ENCODE measurements at regions of chr1 and their contacts with region 1.

Region 1: GRCh38 chr1:5745776-5746610 is 246.2 kb downstream of the NPHP4 start:
- DNase-seq: peak; percentile 71 to 80
- ATAC-seq: peak; percentile 79 to 97
- H3K4me3 ChIP-seq: no peak overlapping the region
- H3K27ac ChIP-seq: no peak overlapping the region
- H3K4me1 ChIP-seq: no peaks in the 10 kb centered on the region
- CTCF ChIP-seq: peak; percentile 73
- EP300 ChIP-seq: no peak
- POLR2A ChIP-seq: no peak
- RAD21 ChIP-seq: peak; percentile 78 to 81

Region 2: GRCh38 chr1:4655674-4656532 is 1090.1 kb before region 1 on chr1:
- CTCF ChIA-PET with region 1: interaction called, 14 read pairs
- POLR2A ChIA-PET with region 1: no interaction called
- DNase-seq: peak; percentile 68 to 76
- ATAC-seq: peak; percentile 80 to 93
- H3K4me3 ChIP-seq: peak overlapping the region; percentile 45
- H3K27ac ChIP-seq: peak overlapping the region; percentile 66 to 83
- H3K4me1 ChIP-seq: peaks cover 16% of the 10 kb centered on the region
- CTCF ChIP-seq: peak; percentile 58
- EP300 ChIP-seq: no peak
- POLR2A ChIP-seq: no peak
- RAD21 ChIP-seq: peak; percentile 82 to 86

Region 3: GRCh38 chr1:5444396-5444795 is 301.6 kb before region 1 on chr1:
- CTCF ChIA-PET with region 1: no interaction called
- POLR2A ChIA-PET with region 1: no interaction called
- DNase-seq: no peak
- ATAC-seq: no peak
- H3K4me3 ChIP-seq: no peak overlapping the region
- H3K27ac ChIP-seq: no peak overlapping the region
- H3K4me1 ChIP-seq: no peaks in the 10 kb centered on the region
- CTCF ChIP-seq: no peak
- EP300 ChIP-seq: no peak
- POLR2A ChIP-seq: no peak
- RAD21 ChIP-seq: no peak

Region 4: GRCh38 chr1:5734996-5735395 is 11.0 kb before region 1 on chr1:
- CTCF ChIA-PET with region 1: interaction called, 19 read pairs
- POLR2A ChIA-PET with region 1: no interaction called
- DNase-seq: no peak
- ATAC-seq: no peak
- H3K4me3 ChIP-seq: no peak overlapping the region
- H3K27ac ChIP-seq: no peak overlapping the region
- H3K4me1 ChIP-seq: no peaks in the 10 kb centered on the region
- CTCF ChIP-seq: no peak
- EP300 ChIP-seq: no peak
- POLR2A ChIP-seq: no peak
- RAD21 ChIP-seq: no peak

Measured in A549 (cell line).